CD8-positive, alpha-beta T cell (primary cell): ENCODE measurements at regions of chr11 and their contacts with region 1.

Region 1: DNA sequence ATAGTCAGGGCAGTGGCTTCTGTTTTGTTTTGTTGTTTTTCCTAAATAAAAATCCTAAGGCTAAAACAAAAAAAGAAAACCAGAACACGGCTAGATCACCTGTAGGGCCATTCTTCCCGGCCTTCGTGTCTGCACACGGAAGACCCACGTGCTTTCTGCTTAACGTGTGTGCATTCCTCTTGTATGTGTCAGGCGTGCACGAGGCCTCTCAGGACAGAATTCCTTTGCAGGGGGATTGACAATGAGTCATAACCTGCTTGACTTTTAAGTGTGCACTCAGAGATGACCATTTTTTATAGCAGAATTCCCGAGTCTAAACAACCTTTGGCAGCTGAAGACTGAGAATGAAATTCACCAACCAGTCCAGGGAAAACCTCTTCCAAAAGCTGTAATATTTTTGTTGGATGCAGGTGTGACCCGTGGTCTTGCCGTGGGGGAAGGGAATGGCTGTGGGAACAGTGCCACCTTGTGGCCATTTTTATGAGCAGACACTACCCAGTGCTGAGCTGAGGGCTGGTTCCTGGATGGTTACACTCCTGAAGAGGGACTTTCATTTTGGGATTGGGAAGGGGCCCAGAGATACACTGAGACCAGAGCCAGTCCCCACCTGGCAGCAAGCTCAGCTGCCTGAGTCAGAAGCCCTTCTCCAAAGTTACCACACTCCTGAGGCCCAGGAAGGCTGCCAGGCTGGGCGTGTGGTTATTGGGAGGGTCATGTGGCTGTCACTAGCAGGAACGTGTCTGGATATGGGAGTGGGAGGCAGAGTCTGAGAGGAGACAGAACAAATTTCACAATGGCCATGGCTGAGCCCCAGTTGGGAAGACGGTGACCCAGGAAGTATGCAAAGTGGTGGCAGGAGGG is 35.8 kb upstream of the DKK3 start:
- DNase-seq: peak; percentile 22 to 79 (median 65)
- ATAC-seq: peak; percentile 77
- H3K4me3 ChIP-seq: no peak overlapping the region
- H3K4me3 Mint-ChIP-seq: no peak overlapping the region
- H3K27ac ChIP-seq: no peak overlapping the region
- H3K27ac Mint-ChIP-seq: no peak overlapping the region
- H3K4me1 ChIP-seq: no peaks in the 10 kb centered on the region
- H3K4me1 Mint-ChIP-seq: peaks cover 3% of the 10 kb centered on the region
- H3K27me3 ChIP-seq: no peaks in the 10 kb centered on the region
- H3K27me3 Mint-ChIP-seq: peaks cover 3% of the 10 kb centered on the region
- CTCF ChIP-seq: peak; percentile 88

Region 2: DNA sequence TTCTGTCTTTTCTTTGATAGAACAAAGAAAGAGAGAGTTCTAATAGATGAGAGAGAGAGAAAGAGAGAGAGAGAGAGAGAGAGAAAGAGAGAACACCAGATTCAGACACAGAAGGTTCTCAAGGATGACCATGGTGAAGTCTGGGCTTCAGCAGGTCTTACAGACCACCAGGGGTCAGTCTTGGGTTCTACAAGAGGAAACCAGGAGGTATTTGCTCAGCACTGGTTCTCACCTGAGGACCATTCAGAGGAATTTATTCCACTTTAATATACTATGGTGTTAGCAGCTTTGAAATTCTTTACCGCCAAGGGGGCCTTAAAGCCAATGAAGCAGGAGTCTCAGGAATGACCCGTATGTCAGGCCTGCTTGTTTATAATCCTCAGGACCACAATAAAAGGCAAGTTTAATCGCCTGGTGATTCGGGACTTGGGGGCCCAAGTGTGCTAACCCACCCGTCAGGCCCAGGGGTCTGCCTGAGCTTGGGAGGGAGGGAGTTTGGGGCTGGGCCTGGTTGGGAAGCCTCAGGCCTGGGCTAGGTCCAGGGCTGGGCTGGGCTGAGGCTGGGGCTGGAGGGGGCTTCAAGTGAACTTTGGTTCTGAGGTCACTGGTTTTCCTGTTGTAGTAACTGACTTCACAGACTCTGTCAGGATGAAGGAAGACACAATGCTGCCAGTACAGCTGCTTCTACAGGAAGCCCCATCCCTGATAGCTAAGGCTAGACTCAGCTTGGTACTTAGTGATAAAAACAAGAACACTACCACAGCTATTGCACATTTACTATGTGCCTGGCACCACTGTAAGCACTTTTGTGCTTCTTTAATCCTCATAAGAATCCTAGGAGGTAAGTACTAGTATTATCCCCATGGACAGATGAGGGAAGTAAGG is 1007.1 kb before region 1 on chr11:
- CTCF ChIA-PET with region 1: interaction called, 3 read pairs
- POLR2A ChIA-PET with region 1: no interaction called
- intact Hi-C with region 1: loop called in 1 of 2 experiments (anchors 10 kb)
- DNase-seq: peak in 5 of 9 experiments; percentile 27 to 81 (median 51)
- ATAC-seq: peak; percentile 91
- H3K4me3 ChIP-seq: no peak overlapping the region
- H3K4me3 Mint-ChIP-seq: no peak overlapping the region
- H3K27ac ChIP-seq: no peak overlapping the region
- H3K27ac Mint-ChIP-seq: peak overlapping the region; percentile 74
- H3K4me1 ChIP-seq: peaks cover 16% of the 10 kb centered on the region
- H3K4me1 Mint-ChIP-seq: peaks cover 16% of the 10 kb centered on the region
- H3K27me3 ChIP-seq: no peaks in the 10 kb centered on the region
- H3K27me3 Mint-ChIP-seq: peaks cover 3% of the 10 kb centered on the region
- CTCF ChIP-seq: peak; percentile 61

Region 3: DNA sequence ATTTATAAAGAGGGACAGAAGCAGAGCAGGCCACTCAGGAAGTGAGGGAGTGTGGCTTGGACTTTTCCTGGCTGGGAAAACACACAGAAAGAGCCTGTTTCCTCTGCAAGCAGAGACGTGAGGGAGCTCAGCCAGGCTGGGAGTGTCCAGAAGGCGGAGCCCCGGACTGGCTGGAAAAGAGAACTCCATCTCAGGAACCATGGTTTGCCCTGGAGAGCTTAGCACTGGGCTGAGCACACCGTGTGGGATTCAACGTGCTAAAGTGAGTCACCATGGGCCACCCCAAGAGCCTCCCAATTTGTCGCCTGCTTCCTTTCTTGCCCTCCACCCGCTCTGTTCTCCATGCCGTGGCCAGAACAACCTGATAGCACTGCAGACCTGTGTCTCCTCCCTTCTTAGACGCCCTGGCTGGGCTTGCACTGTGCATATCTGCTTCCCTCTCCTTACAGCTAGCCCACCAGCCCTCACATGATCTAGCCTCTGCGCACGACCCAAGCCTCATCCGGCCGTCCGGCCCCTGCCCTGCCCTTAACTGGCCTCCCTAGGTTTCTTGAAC is 474.2 kb before region 1 on chr11:
- CTCF ChIA-PET with region 1: no interaction called
- POLR2A ChIA-PET with region 1: no interaction called
- intact Hi-C with region 1: no loop called
- DNase-seq: no peak
- ATAC-seq: no peak
- H3K4me3 ChIP-seq: no peak overlapping the region
- H3K4me3 Mint-ChIP-seq: no peak overlapping the region
- H3K27ac ChIP-seq: no peak overlapping the region
- H3K27ac Mint-ChIP-seq: no peak overlapping the region
- H3K4me1 ChIP-seq: no peaks in the 10 kb centered on the region
- H3K4me1 Mint-ChIP-seq: no peaks in the 10 kb centered on the region
- H3K27me3 ChIP-seq: no peaks in the 10 kb centered on the region
- H3K27me3 Mint-ChIP-seq: no peaks in the 10 kb centered on the region
- CTCF ChIP-seq: no peak

Region 4: GRCh38 chr11:12017243-12017678 is 26.9 kb before region 1 on chr11:
- CTCF ChIA-PET with region 1: no interaction called
- POLR2A ChIA-PET with region 1: no interaction called
- intact Hi-C with region 1: no loop called
- DNase-seq: no peak
- ATAC-seq: no peak
- H3K4me3 ChIP-seq: no peak overlapping the region
- H3K4me3 Mint-ChIP-seq: no peak overlapping the region
- H3K27ac ChIP-seq: no peak overlapping the region
- H3K27ac Mint-ChIP-seq: no peak overlapping the region
- H3K4me1 ChIP-seq: no peaks in the 10 kb centered on the region
- H3K4me1 Mint-ChIP-seq: no peaks in the 10 kb centered on the region
- H3K27me3 ChIP-seq: no peaks in the 10 kb centered on the region
- H3K27me3 Mint-ChIP-seq: peaks cover 21% of the 10 kb centered on the region
- CTCF ChIP-seq: no peak

Region 5: DNA sequence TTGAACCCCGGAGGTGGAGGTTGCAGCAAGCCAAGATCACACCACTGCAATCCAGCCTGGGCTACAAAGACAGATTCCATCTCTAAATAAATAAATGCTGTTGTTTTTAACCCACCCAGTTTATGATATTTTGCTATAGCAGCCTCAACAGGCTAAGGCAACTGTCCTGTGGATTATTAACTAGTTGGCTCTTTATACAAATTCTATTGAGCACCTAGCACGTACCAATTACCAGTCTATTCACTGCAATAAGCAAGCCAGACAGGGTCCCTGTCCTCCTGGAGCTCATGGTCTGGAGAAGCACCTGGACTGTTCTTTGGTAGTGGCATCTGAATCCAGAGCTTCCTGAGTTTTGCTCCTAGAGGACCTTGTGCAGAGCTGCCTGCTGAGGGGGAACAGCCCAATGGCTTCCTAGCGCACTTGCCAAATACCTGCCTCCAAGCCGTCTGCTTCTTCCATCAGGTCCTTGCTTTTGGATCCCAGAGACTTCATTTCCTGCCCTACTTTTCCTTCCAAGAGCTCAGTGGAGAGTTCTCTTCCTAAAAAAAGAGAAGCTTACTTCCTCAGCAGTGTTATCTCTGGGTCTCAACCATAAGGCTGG is 16.3 kb after region 1 on chr11:
- CTCF ChIA-PET with region 1: interaction called, 34 read pairs
- POLR2A ChIA-PET with region 1: no interaction called
- intact Hi-C with region 1: no loop called
- DNase-seq: no peak
- ATAC-seq: no peak
- H3K4me3 ChIP-seq: no peak overlapping the region
- H3K4me3 Mint-ChIP-seq: no peak overlapping the region
- H3K27ac ChIP-seq: no peak overlapping the region
- H3K27ac Mint-ChIP-seq: no peak overlapping the region
- H3K4me1 ChIP-seq: no peaks in the 10 kb centered on the region
- H3K4me1 Mint-ChIP-seq: peaks cover 4% of the 10 kb centered on the region
- H3K27me3 ChIP-seq: no peaks in the 10 kb centered on the region
- H3K27me3 Mint-ChIP-seq: no peaks in the 10 kb centered on the region
- CTCF ChIP-seq: no peak

Region 6: GRCh38 chr11:12224537-12224893 is 180.3 kb after region 1 on chr11:
- CTCF ChIA-PET with region 1: interaction called, 11 read pairs
- POLR2A ChIA-PET with region 1: no interaction called
- intact Hi-C with region 1: no loop called
- DNase-seq: peak; percentile 76 to 96 (median 92)
- ATAC-seq: peak; percentile 89
- H3K4me3 ChIP-seq: peak overlapping the region; percentile 35 to 50
- H3K4me3 Mint-ChIP-seq: peak overlapping the region; percentile 65
- H3K27ac ChIP-seq: peak overlapping the region; percentile 47 to 91
- H3K27ac Mint-ChIP-seq: peak overlapping the region; percentile 91
- H3K4me1 ChIP-seq: peaks cover 45% of the 10 kb centered on the region
- H3K4me1 Mint-ChIP-seq: peaks cover 51% of the 10 kb centered on the region
- H3K27me3 ChIP-seq: no peaks in the 10 kb centered on the region
- H3K27me3 Mint-ChIP-seq: no peaks in the 10 kb centered on the region
- CTCF ChIP-seq: no peak

Region 7: GRCh38 chr11:12251666-12252560 is 207.7 kb after region 1 on chr11:
- CTCF ChIA-PET with region 1: interaction called, 12 read pairs
- POLR2A ChIA-PET with region 1: no interaction called
- intact Hi-C with region 1: no loop called
- DNase-seq: no peak
- ATAC-seq: no peak
- H3K4me3 ChIP-seq: no peak overlapping the region
- H3K4me3 Mint-ChIP-seq: no peak overlapping the region
- H3K27ac ChIP-seq: no peak overlapping the region
- H3K27ac Mint-ChIP-seq: no peak overlapping the region
- H3K4me1 ChIP-seq: no peaks in the 10 kb centered on the region
- H3K4me1 Mint-ChIP-seq: no peaks in the 10 kb centered on the region
- H3K27me3 ChIP-seq: no peaks in the 10 kb centered on the region
- H3K27me3 Mint-ChIP-seq: no peaks in the 10 kb centered on the region
- CTCF ChIP-seq: no peak